ENCODE measurements at regions of chr12 and their contacts with region 1.

Region 1: DNA sequence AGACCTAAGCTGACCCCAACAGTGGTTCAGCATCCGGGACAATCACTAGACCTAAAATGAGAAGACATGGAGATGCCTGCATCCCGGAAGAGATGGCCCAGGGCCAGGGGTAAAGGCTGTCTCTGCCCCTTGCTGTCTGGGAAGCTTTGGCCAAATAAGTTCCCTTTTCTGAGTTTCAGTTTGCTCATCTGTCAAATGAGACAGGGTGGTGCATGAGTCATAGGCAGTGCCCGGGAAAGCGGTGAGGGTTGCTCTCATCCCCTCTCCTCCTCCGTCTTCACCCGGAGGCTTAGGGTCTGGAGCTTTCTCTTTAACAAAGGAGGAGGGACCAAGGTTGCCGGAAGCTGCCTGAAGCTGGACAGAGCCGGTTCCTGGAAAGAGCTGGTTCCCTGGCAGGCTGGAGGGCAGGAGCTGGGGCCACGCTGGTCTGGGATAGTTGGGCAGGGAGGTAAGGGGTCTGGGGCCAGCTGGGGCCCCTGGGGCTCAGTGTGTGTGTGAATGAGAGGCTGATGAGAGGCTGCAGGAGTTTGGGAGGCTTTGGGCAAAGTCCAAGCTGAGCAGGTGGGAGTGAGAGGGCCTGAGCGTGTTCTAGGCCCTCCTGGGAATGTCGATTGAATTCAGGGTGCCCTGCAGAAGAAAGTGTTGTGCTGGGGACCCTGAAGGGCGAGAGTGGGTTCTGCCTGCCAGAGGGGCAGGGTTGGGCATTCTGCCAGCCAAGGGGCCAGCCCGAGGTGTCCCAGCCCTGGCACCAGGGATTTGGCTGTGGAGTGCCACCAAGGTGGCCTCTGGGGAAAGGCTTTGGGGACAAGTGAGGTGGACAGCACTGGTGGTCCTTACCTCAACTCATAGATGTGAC is at the start of gene SDSL:
- DNase-seq: peak; percentile 49
- H3K4me3 ChIP-seq: peak within 1 kb of the TSS; percentile 26 to 36
- H3K27ac ChIP-seq: peak within 1 kb of the TSS; percentile 33 to 50
- H3K4me1 ChIP-seq: no peaks in the 10 kb centered on the region
- H3K27me3 ChIP-seq: no peaks in the 10 kb centered on the region
- CTCF ChIP-seq: no peak
- POLR2A ChIP-seq: peak; percentile 36
- total RNA-seq, gene SDSL: 6.2 to 8.5 TPM

Region 2: DNA sequence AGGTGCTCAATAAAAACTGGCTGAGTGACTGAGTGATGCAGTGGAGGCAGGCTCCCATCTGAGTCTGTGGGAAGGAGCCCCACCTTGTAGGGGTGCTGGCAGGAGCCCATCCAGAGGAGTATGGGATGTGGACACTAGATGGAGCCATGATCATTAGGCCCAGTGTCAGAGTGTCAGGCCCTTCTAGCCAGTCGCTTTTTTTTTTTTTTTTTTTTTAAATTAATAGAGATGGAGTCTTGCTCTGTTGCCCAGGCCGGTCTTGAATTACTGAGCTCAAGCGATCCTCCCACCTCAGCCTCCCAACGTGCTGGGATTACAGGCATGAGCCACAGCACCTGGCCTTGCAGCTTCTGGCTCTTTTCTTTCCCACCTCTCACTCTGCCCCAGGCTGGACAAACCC is 225.3 kb before region 1 on chr12:
- intact Hi-C with region 1: loop called (anchors 10 kb)
- DNase-seq: peak; percentile 63
- H3K4me3 ChIP-seq: no peak overlapping the region
- H3K27ac ChIP-seq: no peak overlapping the region
- H3K4me1 ChIP-seq: no peaks in the 10 kb centered on the region
- H3K27me3 ChIP-seq: no peaks in the 10 kb centered on the region
- CTCF ChIP-seq: peak; percentile 24 to 65 (median 50)
- POLR2A ChIP-seq: no peak

Measured in prostate gland (tissue), 2 donors.